GM12878 (cell line): ENCODE measurements at regions of chr7 and their contacts with region 1.

Region 1: GRCh38 chr7:41809940-41810576 is 107.2 kb upstream of the INHBA start:
- DNase-seq: peak; percentile 84
- ATAC-seq: peak; percentile 95
- H3K4me3 ChIP-seq: no peak overlapping the region
- H3K27ac ChIP-seq: peak overlapping the region; percentile 49
- H3K4me1 ChIP-seq: peaks cover 25% of the 10 kb centered on the region
- H3K27me3 ChIP-seq: no peaks in the 10 kb centered on the region
- CTCF ChIP-seq: no peak
- EP300 ChIP-seq: peak; percentile 56 to 64; a peak in 2 of 4 replicates
- POLR2A ChIP-seq: no peak
- RAD21 ChIP-seq: no peak

Region 2: DNA sequence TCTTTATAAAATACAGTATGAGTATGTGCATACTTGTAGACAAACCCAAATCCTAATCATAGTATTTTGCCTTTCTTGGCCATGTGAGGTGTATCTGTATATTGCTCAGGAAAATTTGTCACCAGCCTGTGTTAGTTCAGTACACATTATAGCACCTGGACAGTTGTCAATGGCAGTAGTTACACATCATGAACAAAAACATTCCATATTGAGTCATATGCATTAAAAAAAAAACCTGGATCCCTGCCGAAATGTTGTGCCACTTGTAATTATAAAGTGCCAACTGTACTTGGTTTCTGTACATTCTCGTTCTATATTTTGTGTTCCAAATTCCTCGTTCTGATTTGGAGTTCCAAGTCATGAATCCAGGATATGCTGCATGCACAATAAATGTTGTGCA is 517.6 kb before region 1 on chr7:
- CTCF ChIA-PET with region 1: no interaction called
- POLR2A ChIA-PET with region 1: no interaction called
- RAD21 ChIA-PET with region 1: no interaction called
- SMC1A ChIA-PET with region 1: no interaction called
- in situ Hi-C with region 1: no loop called
- intact Hi-C with region 1: no loop called
- DNase-seq: no peak
- ATAC-seq: no peak
- H3K4me3 ChIP-seq: no peak overlapping the region
- H3K27ac ChIP-seq: no peak overlapping the region
- H3K4me1 ChIP-seq: no peaks in the 10 kb centered on the region
- H3K27me3 ChIP-seq: no peaks in the 10 kb centered on the region
- CTCF ChIP-seq: no peak
- EP300 ChIP-seq: no peak
- POLR2A ChIP-seq: no peak
- RAD21 ChIP-seq: no peak

Region 3: DNA sequence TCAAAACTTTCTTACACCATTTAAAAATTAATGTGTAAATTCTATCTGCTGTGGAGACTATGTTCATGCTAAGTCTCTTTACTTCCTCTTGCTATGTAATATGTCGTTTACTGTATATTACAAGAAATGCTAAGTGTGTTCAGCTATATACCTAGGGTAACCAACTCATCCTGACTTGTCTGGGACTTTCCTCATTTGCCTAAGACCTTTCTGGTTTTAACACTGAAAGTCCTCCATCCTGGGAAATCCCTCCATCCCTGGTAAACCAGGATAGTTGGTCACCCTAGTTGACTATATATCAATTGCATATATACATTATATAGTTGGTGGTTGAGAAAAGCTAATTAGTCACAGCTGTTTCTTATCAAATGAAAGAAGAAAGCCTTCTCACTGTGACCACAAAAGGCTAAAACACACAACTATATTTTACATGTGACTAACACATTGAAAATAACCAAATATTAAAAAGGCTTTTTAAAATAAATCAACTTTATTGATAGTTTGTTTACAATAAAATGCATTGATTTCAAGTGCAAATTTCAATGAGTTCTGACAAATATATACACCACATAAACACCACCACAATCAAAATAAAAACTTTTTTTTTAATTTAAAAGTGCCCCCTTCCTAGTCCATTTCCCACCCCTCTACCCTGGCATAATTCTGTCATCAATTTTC is 60.5 kb after region 1 on chr7:
- CTCF ChIA-PET with region 1: interaction called, 8 read pairs
- POLR2A ChIA-PET with region 1: no interaction called
- RAD21 ChIA-PET with region 1: interaction called, 14 read pairs
- SMC1A ChIA-PET with region 1: interaction called, 9 read pairs
- in situ Hi-C with region 1: no loop called
- intact Hi-C with region 1: no loop called
- DNase-seq: peak; percentile 53
- ATAC-seq: peak; percentile 89
- H3K4me3 ChIP-seq: no peak overlapping the region
- H3K27ac ChIP-seq: peak overlapping the region; percentile 9; the same call in 1 of the 2 replicates
- H3K4me1 ChIP-seq: peaks cover 3% of the 10 kb centered on the region; the same call in 1 of the 2 replicates
- H3K27me3 ChIP-seq: no peaks in the 10 kb centered on the region
- CTCF ChIP-seq: no peak
- EP300 ChIP-seq: peak; percentile 45 to 49; a peak in 2 of 4 replicates
- POLR2A ChIP-seq: no peak
- RAD21 ChIP-seq: no peak

Region 4: DNA sequence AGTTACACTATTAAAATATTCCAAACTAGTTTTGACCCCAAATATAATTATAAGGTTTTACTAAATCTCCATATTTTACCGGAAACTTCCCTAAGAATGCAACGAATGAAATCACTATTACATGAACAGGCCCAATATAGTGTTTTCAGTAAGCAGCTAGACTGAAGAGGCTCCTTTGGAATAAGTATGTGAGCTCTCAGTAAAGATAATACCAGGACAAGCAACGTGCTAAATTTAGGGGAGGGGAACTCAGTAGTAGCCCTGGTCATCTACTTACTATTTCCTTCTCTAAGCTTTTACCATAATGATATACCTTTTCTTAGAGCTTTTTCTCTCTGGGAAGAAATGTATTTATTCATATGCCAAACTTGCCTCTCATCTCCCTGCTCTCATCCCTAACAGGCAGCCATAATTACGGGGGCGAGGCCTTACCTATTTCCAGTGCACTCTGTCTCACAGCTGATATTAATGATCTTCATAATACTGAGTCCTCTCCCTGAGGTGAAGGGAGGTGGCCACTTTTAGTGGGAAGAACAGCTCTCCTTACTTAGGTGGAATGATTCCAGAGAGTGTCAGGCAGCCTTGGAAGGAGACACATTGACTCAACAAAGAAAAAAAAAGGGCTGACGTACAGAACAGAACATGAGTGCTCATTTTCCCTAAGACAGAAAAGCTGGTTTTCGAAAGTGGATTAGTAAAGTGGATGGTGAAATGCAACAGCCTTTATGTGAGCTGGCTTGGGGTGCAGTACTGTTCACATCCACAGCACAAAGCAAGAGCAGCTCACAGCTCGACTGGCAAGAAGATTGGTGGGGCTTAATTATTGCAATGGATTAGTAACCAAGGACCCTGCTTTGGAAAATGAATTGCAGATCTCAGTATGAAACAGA is 261.6 kb after region 1 on chr7:
- CTCF ChIA-PET with region 1: no interaction called
- POLR2A ChIA-PET with region 1: no interaction called
- RAD21 ChIA-PET with region 1: no interaction called
- SMC1A ChIA-PET with region 1: no interaction called
- in situ Hi-C with region 1: no loop called
- intact Hi-C with region 1: no loop called
- DNase-seq: no peak
- ATAC-seq: no peak
- H3K4me3 ChIP-seq: no peak overlapping the region
- H3K27ac ChIP-seq: no peak overlapping the region
- H3K4me1 ChIP-seq: no peaks in the 10 kb centered on the region
- H3K27me3 ChIP-seq: no peaks in the 10 kb centered on the region
- CTCF ChIP-seq: no peak
- EP300 ChIP-seq: no peak
- POLR2A ChIP-seq: no peak
- RAD21 ChIP-seq: no peak